ENCODE measurements at regions of chr7 and their contacts with region 1.

Region 1: DNA sequence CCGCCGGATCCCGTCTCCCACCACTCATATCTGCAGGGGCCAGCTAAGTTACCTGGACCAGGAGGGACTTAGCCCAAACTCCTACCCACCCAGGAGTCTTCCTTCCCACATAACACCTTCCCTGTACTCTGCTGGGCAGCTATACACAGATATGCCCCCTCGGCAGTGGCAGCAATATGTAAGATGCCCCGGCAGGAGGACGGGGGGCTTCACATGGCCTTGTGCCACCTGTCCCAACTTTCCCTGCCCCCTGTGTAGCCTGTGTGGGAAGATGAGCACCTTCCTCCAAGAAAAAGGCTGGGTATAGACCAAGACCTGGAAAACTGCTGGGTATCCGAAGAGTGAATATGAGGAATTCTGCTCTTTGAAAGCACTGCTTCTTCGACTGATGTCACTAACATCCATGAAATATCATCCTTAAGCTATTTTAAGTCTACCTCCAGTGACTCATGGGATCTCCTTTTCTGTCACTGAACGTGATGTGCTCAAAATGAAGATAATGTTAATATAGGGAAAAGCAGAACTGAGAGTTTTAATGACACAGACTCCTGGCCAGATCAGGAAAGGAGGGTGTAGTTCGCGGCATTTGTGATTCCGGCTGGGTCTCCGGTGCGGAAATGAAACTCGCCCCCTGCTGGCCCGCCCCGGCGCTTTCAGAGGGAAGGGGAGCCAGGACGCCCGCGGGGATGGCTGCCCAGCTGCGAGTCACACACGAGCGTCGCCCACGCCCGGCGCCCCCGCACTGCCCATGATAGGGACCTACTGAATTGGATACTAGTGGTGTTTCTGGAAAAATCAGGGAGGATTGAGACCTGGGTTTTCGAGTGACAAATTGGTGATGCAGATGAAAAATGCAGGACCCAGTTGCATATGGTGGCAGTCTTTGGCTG is 256.9 kb upstream of the NFE2L3 start:
- DNase-seq: peak; percentile 87
- ATAC-seq: peak; percentile 86
- H3K4me3 ChIP-seq: peak overlapping the region; percentile 0
- H3K27ac ChIP-seq: no peak overlapping the region
- H3K4me1 ChIP-seq: peaks cover 3% of the 10 kb centered on the region
- H3K27me3 ChIP-seq: peaks cover under 1% of the 10 kb centered on the region
- CTCF ChIP-seq: peak; percentile 76

Region 2: DNA sequence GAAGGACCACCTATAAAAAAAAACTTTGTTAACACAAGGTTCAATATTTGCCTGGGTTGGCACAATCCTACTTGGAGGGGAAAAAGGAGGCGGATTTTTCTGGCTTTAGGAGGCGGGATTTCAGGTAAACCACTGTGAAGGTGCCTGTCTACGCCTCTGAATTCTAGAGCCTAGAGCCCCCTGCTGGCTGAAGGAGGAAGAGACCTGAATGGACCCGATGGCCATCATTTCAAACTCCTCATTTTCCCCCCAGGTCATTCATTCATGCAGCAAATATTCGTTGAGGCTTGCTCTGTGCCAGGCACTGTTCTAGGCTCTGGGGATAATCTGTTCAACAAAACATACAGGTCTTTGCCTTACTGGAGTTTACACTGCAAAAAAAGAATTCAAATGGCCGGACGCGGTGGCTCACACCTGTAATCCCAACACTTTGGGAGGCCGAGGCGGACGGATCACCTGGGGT is 166.6 kb after region 1 on chr7:
- intact Hi-C with region 1: loop called (anchors 10 kb)
- DNase-seq: peak; percentile 75
- ATAC-seq: peak; percentile 93
- H3K4me3 ChIP-seq: no peak overlapping the region
- H3K27ac ChIP-seq: no peak overlapping the region
- H3K4me1 ChIP-seq: no peaks in the 10 kb centered on the region
- H3K27me3 ChIP-seq: peaks cover 12% of the 10 kb centered on the region
- CTCF ChIP-seq: peak; percentile 78